OCI-LY7 (cell line): ENCODE measurements at regions of chr4 and their contacts with region 1.

Region 1: GRCh38 chr4:77095101-77095821 is 19.5 kb upstream of the CCNI start:
- DNase-seq: peak; percentile 87
- H3K4me3 ChIP-seq: no peak overlapping the region
- H3K27ac ChIP-seq: no peak overlapping the region
- H3K4me1 ChIP-seq: peaks cover 26% of the 10 kb centered on the region
- CTCF ChIP-seq: peak; percentile 98

Region 2: GRCh38 chr4:76535603-76536367 is 559.5 kb before region 1 on chr4:
- CTCF ChIA-PET with region 1: no interaction called
- POLR2A ChIA-PET with region 1: no interaction called
- intact Hi-C with region 1: no loop called
- DNase-seq: no peak
- H3K4me3 ChIP-seq: no peak overlapping the region
- H3K27ac ChIP-seq: no peak overlapping the region
- H3K4me1 ChIP-seq: no peaks in the 10 kb centered on the region
- CTCF ChIP-seq: no peak

Region 3: GRCh38 chr4:77075869-77076799 is 19.1 kb before region 1 on chr4 and contains the start of gene CCNI:
- CTCF ChIA-PET with region 1: interaction called, 3 read pairs
- POLR2A ChIA-PET with region 1: interaction called, 26 read pairs
- intact Hi-C with region 1: no loop called
- DNase-seq: peak; percentile 99
- H3K4me3 ChIP-seq: peak within 1 kb of the TSS; percentile 95
- H3K27ac ChIP-seq: peak within 1 kb of the TSS; percentile 84
- H3K4me1 ChIP-seq: peaks cover 64% of the 10 kb centered on the region
- CTCF ChIP-seq: no peak
- total RNA-seq, gene CCNI: 105 and 116 TPM in 2 replicates

Region 4: GRCh38 chr4:77082886-77083608 is 12.2 kb before region 1 on chr4:
- CTCF ChIA-PET with region 1: interaction called, 3 read pairs
- POLR2A ChIA-PET with region 1: interaction called, 26 read pairs
- intact Hi-C with region 1: no loop called
- DNase-seq: no peak
- H3K4me3 ChIP-seq: no peak overlapping the region
- H3K27ac ChIP-seq: no peak overlapping the region
- H3K4me1 ChIP-seq: peaks cover 33% of the 10 kb centered on the region
- CTCF ChIP-seq: no peak

Region 5: GRCh38 chr4:77418333-77419038 is 323.2 kb after region 1 on chr4:
- CTCF ChIA-PET with region 1: no interaction called
- POLR2A ChIA-PET with region 1: no interaction called
- intact Hi-C with region 1: no loop called
- DNase-seq: peak; percentile 5
- H3K4me3 ChIP-seq: no peak overlapping the region
- H3K27ac ChIP-seq: no peak overlapping the region
- H3K4me1 ChIP-seq: no peaks in the 10 kb centered on the region
- CTCF ChIP-seq: peak; percentile 61